Mammary epithelial cell (primary cell): ENCODE measurements at regions of chr14 and their contacts with region 1.

Region 1: DNA sequence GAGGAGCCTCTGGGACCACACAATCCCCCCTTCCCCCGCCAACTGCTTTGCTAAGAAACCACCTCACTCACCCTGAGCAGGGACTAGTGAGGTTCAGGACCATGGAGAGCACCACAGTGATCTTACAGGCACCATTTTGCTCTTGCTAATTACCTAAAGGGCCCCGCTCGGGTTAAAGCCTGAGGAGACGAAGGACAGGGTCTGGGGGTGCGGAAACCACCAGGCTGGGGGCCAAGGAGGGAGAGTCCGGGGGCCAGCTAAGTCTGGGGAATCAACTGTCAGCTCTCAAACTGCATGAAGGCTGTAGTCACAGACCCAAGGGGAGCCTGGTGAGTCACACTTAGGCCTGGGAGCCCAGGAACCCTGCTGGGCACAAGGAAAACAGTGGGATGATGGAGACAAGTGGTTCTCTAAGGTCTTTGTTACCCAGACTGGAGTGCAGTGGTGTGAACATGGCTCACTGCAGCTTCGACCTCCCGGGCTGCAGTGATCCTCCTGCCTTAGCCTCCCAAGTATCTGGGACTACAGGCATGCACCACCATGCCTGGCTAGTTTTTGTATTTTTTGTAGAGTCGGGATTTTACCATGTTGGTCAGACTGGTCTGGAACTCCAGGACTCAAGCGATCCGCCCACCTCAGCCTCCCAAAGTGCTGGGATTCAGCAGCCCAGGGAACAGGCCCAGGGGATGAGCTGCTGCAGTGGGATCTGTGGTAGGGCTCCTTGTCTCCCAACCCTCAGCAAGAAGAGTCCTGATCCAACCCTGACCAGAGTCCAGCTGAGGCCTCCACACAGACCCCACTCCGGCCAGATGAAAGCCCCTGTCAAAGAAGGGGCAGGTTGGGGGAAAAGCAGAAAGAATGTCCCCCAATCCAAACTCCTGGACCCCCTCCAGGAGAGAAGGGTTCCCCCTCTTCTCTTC is 98.8 kb downstream of the CALM1 start:
- DNase-seq: peak; percentile 51
- H3K4me3 ChIP-seq: no peak overlapping the region
- H3K27ac ChIP-seq: no peak overlapping the region
- H3K4me1 ChIP-seq: peaks cover 6% of the 10 kb centered on the region
- H3K27me3 ChIP-seq: no peaks in the 10 kb centered on the region
- CTCF ChIP-seq: no peak

Region 2: GRCh38 chr14:90444036-90444696 is 51.5 kb before region 1 on chr14:
- CTCF ChIA-PET with region 1: no interaction called
- dilution Hi-C with region 1: no loop called
- in situ Hi-C with region 1: no loop called
- intact Hi-C with region 1: loop called (anchors 2 kb)
- DNase-seq: peak; percentile 98
- H3K4me3 ChIP-seq: no peak overlapping the region
- H3K27ac ChIP-seq: peak overlapping the region; percentile 69
- H3K4me1 ChIP-seq: peaks cover 32% of the 10 kb centered on the region
- H3K27me3 ChIP-seq: no peaks in the 10 kb centered on the region
- CTCF ChIP-seq: no peak

Region 3: GRCh38 chr14:90599748-90600507 is 104.3 kb after region 1 on chr14:
- CTCF ChIA-PET with region 1: no interaction called
- dilution Hi-C with region 1: no loop called
- in situ Hi-C with region 1: no loop called
- intact Hi-C with region 1: no loop called
- DNase-seq: peak; percentile 6
- H3K4me3 ChIP-seq: no peak overlapping the region
- H3K27ac ChIP-seq: no peak overlapping the region
- H3K4me1 ChIP-seq: peaks cover 5% of the 10 kb centered on the region
- H3K27me3 ChIP-seq: no peaks in the 10 kb centered on the region
- CTCF ChIP-seq: peak; percentile 3 to 49

Region 4: DNA sequence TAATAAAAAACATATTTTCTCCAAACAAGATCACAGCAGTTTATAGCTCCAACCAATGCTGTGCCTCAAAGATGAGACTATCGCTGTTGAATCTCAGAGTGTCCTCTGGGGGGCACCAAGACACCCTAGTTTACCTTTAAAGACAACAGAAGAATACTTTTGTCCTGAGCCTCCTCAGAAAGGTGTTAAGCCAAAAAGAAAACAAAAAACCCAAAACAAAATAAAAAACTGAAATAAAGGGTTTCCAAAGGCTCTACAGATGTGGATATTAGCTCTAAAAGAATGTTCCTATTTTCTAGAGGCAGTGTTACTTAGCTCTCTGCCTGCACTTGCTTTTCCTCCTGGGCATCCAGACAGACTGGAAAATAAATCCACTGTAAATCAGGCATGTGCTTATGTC is 407.5 kb after region 1 on chr14:
- CTCF ChIA-PET with region 1: no interaction called
- dilution Hi-C with region 1: no loop called
- in situ Hi-C with region 1: no loop called
- intact Hi-C with region 1: no loop called
- DNase-seq: peak; percentile 38
- H3K4me3 ChIP-seq: no peak overlapping the region
- H3K27ac ChIP-seq: no peak overlapping the region
- H3K4me1 ChIP-seq: no peaks in the 10 kb centered on the region
- H3K27me3 ChIP-seq: no peaks in the 10 kb centered on the region
- CTCF ChIP-seq: peak; percentile 76 to 86